ENCODE measurements at regions of chr1 and their contacts with region 1.

Region 1: DNA sequence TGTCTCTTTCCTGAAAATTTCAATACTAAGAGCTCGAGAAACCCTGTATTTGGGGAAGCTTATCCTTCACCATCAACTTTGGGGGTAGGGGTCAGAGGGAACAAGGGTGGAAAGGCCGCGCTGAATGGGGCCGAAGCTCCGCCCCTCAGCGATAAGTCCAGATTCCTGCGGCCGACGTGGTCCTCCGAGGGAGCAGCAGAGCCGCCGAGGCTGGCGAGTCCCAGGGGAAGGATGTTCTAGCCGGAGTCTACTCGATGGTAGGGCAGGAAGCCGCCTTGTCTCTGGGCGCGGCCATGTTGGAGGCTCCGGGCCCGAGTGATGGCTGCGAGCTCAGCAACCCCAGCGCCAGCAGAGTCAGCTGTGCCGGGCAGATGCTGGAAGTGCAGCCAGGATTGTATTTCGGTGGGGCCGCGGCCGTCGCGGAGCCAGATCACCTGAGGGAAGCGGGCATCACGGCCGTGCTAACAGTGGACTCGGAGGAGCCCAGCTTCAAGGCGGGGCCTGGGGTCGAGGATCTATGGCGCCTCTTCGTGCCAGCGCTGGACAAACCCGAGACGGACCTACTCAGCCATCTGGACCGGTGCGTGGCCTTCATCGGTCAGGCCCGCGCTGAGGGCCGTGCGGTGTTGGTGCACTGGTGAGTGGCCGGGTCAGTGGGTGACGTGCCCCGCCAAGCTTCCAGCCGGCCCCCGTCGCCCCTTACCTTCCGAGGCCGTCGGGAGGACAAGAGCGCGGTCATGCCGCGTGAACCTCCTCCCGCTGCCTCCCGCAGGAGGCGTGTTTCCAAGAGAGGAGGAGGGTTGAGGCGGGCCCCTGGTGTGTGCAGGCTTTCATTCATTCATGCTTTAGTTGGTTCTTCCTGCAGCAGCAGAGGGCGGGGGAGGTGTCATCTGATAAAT is at the start of gene DUSP12:
- DNase-seq: peak; percentile 98
- H3K4me3 ChIP-seq: peak within 1 kb of the TSS; percentile 72 to 96 (median 82)
- H3K27ac ChIP-seq: peak within 1 kb of the TSS; percentile 82 to 95 (median 90)
- H3K4me1 ChIP-seq: peaks cover 14 to 26% (median 18%) of the 10 kb centered on the region in 4 donors
- H3K27me3 ChIP-seq: peaks cover 0 to 6% (median 3%) of the 10 kb centered on the region in 4 donors
- CTCF ChIP-seq: no peak
- EP300 ChIP-seq: no peak
- POLR2A ChIP-seq: no peak
- total RNA-seq, gene DUSP12: 12.5 to 26.1 (median 22.8) TPM

Region 2: GRCh38 chr1:161486806-161487741 is 262.7 kb before region 1 on chr1:
- intact Hi-C with region 1: loop called (anchors 10 kb)
- DNase-seq: no peak
- H3K4me3 ChIP-seq: peak overlapping the region in 3 of 4 donors; percentile 25 to 29 (median 28)
- H3K27ac ChIP-seq: no peak overlapping the region
- H3K4me1 ChIP-seq: peaks cover 0 to 9% (median 3%) of the 10 kb centered on the region in 4 donors
- H3K27me3 ChIP-seq: peaks cover 0 to 44% (median 0%) of the 10 kb centered on the region in 4 donors
- CTCF ChIP-seq: peak; percentile 62 to 80 (median 75)
- EP300 ChIP-seq: no peak
- POLR2A ChIP-seq: no peak

Measured in esophagus muscularis mucosa (tissue), 4 donors.